ENCODE measurements at regions of chr2 and their contacts with region 1.

Region 1: DNA sequence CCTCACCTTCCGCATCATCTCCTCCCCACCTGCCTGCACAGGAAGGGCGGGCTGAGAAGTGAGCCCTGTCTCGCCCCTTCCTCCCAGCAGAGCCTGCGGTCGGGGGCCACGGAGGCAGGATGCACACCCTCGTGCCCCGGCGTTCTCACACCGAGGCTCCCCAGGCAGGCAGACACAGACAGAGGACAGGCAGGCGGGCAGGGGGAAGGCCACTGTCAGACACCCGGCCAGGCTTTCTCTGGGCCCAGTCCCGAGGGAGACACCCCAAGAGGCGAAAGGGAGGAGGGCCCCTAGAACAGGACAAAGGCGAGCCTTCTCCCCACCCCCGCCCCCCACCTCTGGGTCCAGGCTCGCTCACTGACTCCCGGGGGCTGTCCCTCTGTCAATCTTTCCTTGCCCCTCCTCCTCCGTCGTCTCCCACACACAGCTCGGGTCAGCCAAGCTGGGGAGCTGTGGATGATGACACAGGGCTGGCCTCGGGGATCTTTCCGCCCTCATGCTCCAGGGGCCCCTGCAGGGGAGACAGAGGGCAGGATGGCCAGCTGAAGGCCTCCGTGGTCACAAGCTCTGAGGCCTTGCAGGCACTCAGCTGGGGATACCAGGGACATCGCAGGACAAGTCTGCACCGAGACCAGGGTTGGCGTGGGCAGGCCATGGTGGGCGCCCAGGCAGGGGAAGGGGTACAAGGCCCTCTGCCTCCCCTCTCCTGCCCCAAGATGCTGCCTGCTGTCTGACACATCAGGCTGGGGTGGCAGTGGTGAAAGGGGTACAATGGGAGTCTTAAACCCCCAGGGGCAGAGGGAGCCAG is 24.9 kb downstream of the BIN1 start:
- DNase-seq: peak; percentile 72
- H3K4me3 Mint-ChIP-seq: peak overlapping the region; percentile 86
- H3K27ac Mint-ChIP-seq: peak overlapping the region; percentile 89
- H3K4me1 Mint-ChIP-seq: peaks cover 84% of the 10 kb centered on the region
- H3K27me3 Mint-ChIP-seq: peaks cover 2% of the 10 kb centered on the region

Region 2: GRCh38 chr2:127025359-127026166 is 56.5 kb before region 1 on chr2:
- intact Hi-C with region 1: loop called (anchors 2 kb)
- DNase-seq: peak; percentile 76
- H3K4me3 Mint-ChIP-seq: peak overlapping the region; percentile 73
- H3K27ac Mint-ChIP-seq: no peak overlapping the region
- H3K4me1 Mint-ChIP-seq: peaks cover 15% of the 10 kb centered on the region
- H3K27me3 Mint-ChIP-seq: peaks cover 36% of the 10 kb centered on the region

Region 3: GRCh38 chr2:127064642-127065250 is 17.3 kb before region 1 on chr2:
- intact Hi-C with region 1: loop called (anchors 1 kb)
- DNase-seq: peak; percentile 60
- H3K4me3 Mint-ChIP-seq: no peak overlapping the region
- H3K27ac Mint-ChIP-seq: peak overlapping the region; percentile 65
- H3K4me1 Mint-ChIP-seq: peaks cover 14% of the 10 kb centered on the region
- H3K27me3 Mint-ChIP-seq: no peaks in the 10 kb centered on the region

Region 4: GRCh38 chr2:127106951-127107621 is 25.1 kb after region 1 on chr2 and contains the start of gene BIN1:
- intact Hi-C with region 1: loop called (anchors 1 kb)
- DNase-seq: peak; percentile 77
- H3K4me3 Mint-ChIP-seq: peak within 1 kb of the TSS; percentile 83
- H3K27ac Mint-ChIP-seq: no peak within 1 kb of the TSS
- H3K4me1 Mint-ChIP-seq: peaks cover 6% of the 10 kb centered on the region
- H3K27me3 Mint-ChIP-seq: peaks cover 40% of the 10 kb centered on the region
- total RNA-seq, gene BIN1: 38.4 and 41.9 TPM in 2 replicates

Region 5: DNA sequence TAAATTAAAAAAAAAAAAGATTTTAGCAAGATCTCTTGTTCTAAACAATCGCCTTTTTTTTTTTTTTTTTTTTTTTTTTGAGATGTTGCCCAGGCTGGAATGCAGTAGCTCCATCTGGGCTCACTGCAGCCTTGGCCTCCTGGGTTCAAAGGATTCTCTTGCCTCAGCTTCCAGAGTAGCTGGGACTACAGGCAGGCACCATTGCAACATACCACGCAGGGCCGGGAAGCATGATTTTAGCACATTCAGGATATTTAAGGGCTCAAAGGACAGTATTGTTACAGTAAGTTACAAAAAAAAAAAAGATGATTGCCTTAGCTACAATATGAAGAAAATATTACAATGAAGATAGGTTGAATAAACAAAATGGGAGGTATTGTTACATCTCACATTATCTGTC is 975.3 kb after region 1 on chr2:
- intact Hi-C with region 1: no loop called
- DNase-seq: no peak
- H3K4me3 Mint-ChIP-seq: no peak overlapping the region
- H3K27ac Mint-ChIP-seq: no peak overlapping the region
- H3K4me1 Mint-ChIP-seq: no peaks in the 10 kb centered on the region
- H3K27me3 Mint-ChIP-seq: peaks cover 4% of the 10 kb centered on the region

Measured in activated T-helper 1 cell treated with anti-CD3 and anti-CD28 coated beads, Interleukin-12 subunit alpha, Interleukin-12 subunit beta, Interleukin-2, Interleukin-4 antibody, amounts not matched to agents 30 ng/mL and 10 ng/mL and 1 ng/mL, durations not matched to agents 14 hours and 24 hours and 36 hours (primary cell).